Panc1 (cell line): ENCODE measurements at regions of chr2 and their contacts with region 1.

Region 1: GRCh38 chr2:170815746-170816503 is 762 bp upstream of the GAD1 start:
- DNase-seq: no peak
- ATAC-seq: peak; percentile 72
- H3K4me3 ChIP-seq: peak overlapping the region; percentile 68 to 92
- H3K27ac ChIP-seq: peak overlapping the region; percentile 79
- H3K4me1 ChIP-seq: peaks cover 10% of the 10 kb centered on the region
- H3K27me3 ChIP-seq: no peaks in the 10 kb centered on the region; the same call in none of the 2 replicates
- CTCF ChIP-seq: peak; percentile 93

Region 2: DNA sequence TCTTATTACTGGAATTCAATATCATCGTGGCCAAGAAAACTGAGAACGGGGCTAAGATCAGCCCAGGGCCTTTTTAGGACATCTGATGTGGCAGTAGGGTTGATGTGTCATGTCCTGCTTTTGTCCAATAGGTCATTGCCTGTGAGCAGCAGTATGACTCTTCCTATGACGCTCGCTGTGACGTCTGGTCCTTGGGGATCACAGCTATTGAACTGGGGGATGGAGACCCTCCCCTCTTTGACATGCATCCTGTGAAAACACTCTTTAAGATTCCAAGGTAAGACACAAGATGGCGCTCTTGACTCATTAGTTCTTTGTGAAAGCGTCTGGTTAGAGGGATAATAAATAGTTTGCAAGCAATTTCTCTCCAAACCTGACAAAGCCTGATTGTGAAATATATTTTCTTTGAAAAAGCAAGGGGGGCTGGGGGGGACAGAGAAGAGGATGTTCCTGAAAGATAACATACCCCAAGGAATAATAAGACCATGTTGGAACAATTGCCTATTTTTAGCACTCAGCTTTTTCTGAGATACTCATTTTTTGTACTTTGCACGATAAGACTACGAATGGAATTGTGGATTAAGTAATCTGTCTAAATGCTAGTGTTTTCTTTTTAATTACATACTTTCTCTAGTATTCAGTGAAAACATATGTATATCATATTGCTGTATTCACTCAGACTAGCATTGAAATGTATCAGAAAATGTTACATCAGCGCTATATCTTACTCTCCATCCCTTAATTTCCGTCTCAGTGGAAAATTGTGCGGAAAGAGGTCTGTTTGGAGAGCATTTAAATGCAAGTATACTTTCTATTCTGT is 579.9 kb before region 1 on chr2:
- CTCF ChIA-PET with region 1: interaction called, 4 read pairs
- POLR2A ChIA-PET with region 1: no interaction called
- in situ Hi-C with region 1: no loop called
- intact Hi-C with region 1: loop called (anchors 5 kb)
- DNase-seq: peak; percentile 15
- ATAC-seq: peak; percentile 82
- H3K4me3 ChIP-seq: no peak overlapping the region
- H3K27ac ChIP-seq: no peak overlapping the region
- H3K4me1 ChIP-seq: no peaks in the 10 kb centered on the region
- H3K27me3 ChIP-seq: peaks cover 10% of the 10 kb centered on the region
- CTCF ChIP-seq: peak; percentile 75

Region 3: GRCh38 chr2:170369894-170370293 is 446.0 kb before region 1 on chr2:
- CTCF ChIA-PET with region 1: interaction called, 9 read pairs
- POLR2A ChIA-PET with region 1: interaction called, 5 read pairs
- in situ Hi-C with region 1: no loop called
- intact Hi-C with region 1: loop called (anchors 2 kb)
- DNase-seq: no peak
- ATAC-seq: peak; percentile 63; the same call in 1 of the 2 replicates
- H3K4me3 ChIP-seq: no peak overlapping the region
- H3K27ac ChIP-seq: no peak overlapping the region
- H3K4me1 ChIP-seq: no peaks in the 10 kb centered on the region
- H3K27me3 ChIP-seq: peaks cover 35% of the 10 kb centered on the region
- CTCF ChIP-seq: peak; percentile 47; the same call in 1 of the 2 replicates

Region 4: GRCh38 chr2:170409164-170409535 is 406.8 kb before region 1 on chr2:
- CTCF ChIA-PET with region 1: interaction called, 7 read pairs
- POLR2A ChIA-PET with region 1: interaction called, 9 read pairs
- in situ Hi-C with region 1: no loop called
- intact Hi-C with region 1: loop called (anchors 10 kb)
- DNase-seq: no peak
- ATAC-seq: peak; percentile 68; the same call in 1 of the 2 replicates
- H3K4me3 ChIP-seq: no peak overlapping the region
- H3K27ac ChIP-seq: no peak overlapping the region
- H3K4me1 ChIP-seq: no peaks in the 10 kb centered on the region
- H3K27me3 ChIP-seq: peaks cover 3% of the 10 kb centered on the region; the same call in 1 of the 2 replicates
- CTCF ChIP-seq: peak; percentile 93

Region 5: DNA sequence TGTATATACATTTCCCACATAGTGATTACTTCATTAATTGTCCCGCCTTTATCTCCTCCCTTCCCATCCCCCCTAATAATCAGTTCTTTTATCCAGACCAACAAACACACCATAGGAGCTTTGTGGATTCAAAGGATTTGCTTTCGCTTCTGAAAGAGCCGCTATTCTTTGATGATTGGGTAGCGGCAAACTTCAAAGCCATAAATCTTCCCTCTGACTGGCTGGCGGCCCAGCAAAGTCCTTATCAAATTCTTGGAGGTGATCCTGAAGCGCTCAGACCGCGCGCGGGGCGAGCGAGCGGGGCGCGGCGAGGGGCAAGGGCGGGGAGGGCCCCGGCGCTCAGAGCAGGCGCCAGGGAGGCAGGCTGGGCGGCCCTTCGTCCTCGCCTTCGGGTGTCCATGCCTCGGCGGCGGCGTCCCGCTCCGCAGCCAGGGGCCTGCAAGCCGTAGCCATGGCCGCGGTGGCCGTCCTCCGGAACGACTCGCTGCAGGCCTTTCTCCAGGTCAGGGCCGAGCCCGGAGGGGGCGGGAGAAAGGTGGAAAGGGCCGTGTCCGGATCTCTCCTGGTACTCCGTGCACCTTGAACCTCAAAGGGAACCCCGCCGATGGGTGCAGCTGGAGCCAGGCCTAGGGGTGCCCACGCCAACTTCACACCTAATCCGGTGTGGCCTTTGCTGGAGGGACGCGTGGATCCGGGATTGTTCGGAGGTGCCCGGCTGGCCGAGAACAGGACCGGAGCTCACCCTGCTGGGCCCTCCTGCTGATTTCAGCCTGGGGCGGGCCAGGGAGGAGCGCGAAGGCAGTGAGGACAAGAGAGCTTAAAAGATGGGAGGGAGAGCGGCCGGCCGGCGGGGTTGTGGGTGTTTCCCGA is 100.6 kb before region 1 on chr2 and contains the start of gene SP5:
- CTCF ChIA-PET with region 1: no interaction called
- POLR2A ChIA-PET with region 1: no interaction called
- in situ Hi-C with region 1: no loop called
- intact Hi-C with region 1: loop called (anchors 10 kb)
- DNase-seq: no peak
- ATAC-seq: peak; percentile 71
- H3K4me3 ChIP-seq: peak within 1 kb of the TSS; percentile 46 to 51
- H3K27ac ChIP-seq: no peak within 1 kb of the TSS
- H3K4me1 ChIP-seq: peaks cover 12% of the 10 kb centered on the region
- H3K27me3 ChIP-seq: peaks cover 13% of the 10 kb centered on the region
- CTCF ChIP-seq: no peak; the same call in 1 of the 2 replicates
- total RNA-seq, gene SP5: 0.64 TPM

Region 6: DNA sequence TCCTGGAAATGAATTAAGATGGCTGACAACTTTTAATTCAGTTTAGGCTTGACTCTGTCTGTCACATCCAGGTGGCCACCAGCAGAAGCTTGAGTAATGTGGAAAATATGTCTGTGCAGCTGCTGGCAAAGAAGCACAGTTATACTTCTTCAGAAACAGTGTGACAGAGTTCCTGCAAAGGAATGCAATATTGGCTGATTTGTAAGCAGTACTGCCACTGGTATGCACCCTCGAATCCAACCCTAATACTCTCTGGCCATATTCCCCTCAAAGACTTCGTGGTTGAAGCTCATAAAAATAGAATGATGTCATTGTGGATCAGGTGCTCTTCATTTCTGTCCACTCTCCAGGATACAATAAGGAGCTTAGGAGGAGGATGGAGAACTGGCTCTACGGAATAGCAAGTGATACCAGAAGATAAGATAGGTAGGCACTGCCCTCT is 531.7 kb after region 1 on chr2:
- CTCF ChIA-PET with region 1: no interaction called
- POLR2A ChIA-PET with region 1: no interaction called
- in situ Hi-C with region 1: no loop called
- intact Hi-C with region 1: no loop called
- DNase-seq: peak; percentile 64
- ATAC-seq: peak; percentile 89
- H3K4me3 ChIP-seq: no peak overlapping the region
- H3K27ac ChIP-seq: no peak overlapping the region
- H3K4me1 ChIP-seq: peaks cover 18% of the 10 kb centered on the region
- H3K27me3 ChIP-seq: no peaks in the 10 kb centered on the region
- CTCF ChIP-seq: no peak